CD8-positive, alpha-beta T cell (primary cell): ENCODE measurements at regions of chr6 and their contacts with region 1.

Region 1: DNA sequence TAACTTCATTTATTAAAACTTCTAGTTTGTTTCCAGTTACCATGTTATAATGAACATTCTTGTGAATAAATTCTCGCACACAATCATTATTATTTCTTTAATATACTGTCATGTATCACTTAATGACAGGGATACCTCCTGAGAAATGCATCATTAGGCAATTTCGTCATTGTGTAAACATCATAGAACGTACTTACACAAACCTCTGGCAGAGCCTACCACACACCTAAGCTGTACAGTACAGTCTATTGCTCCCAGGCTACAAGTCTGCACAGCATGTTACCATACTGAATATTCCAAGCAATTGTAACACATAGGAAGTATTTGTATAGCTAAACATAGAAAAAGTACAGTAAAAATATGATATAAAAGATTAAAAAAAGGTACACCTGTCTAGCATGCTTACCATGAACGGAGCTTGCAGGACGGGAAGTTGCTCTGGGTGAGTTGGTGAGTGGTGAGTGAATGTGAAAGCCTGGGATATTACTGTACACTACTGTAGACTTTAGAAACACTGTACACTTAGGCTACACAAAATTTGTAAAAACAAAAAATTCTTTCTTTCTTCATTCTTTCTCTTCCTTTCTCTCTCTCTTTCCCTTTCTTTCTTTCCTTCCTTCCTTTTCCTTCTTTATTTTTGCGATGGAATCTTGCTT is 268.2 kb upstream of the SOX4 start:
- DNase-seq: no peak
- ATAC-seq: no peak
- H3K4me3 ChIP-seq: no peak overlapping the region
- H3K4me3 Mint-ChIP-seq: no peak overlapping the region
- H3K27ac ChIP-seq: no peak overlapping the region
- H3K27ac Mint-ChIP-seq: no peak overlapping the region
- H3K4me1 ChIP-seq: no peaks in the 10 kb centered on the region
- H3K4me1 Mint-ChIP-seq: no peaks in the 10 kb centered on the region
- H3K27me3 ChIP-seq: no peaks in the 10 kb centered on the region
- H3K27me3 Mint-ChIP-seq: peaks cover 2% of the 10 kb centered on the region
- CTCF ChIP-seq: no peak

Region 2: GRCh38 chr6:23272536-23272935 is 1947.2 kb after region 1 on chr6:
- CTCF ChIA-PET with region 1: no interaction called
- POLR2A ChIA-PET with region 1: no interaction called
- intact Hi-C with region 1: loop called in 1 of 2 experiments (anchors 10 kb)
- DNase-seq: no peak
- ATAC-seq: no peak
- H3K4me3 ChIP-seq: no peak overlapping the region
- H3K4me3 Mint-ChIP-seq: no peak overlapping the region
- H3K27ac ChIP-seq: no peak overlapping the region
- H3K27ac Mint-ChIP-seq: no peak overlapping the region
- H3K4me1 ChIP-seq: no peaks in the 10 kb centered on the region
- H3K4me1 Mint-ChIP-seq: no peaks in the 10 kb centered on the region
- H3K27me3 ChIP-seq: no peaks in the 10 kb centered on the region
- H3K27me3 Mint-ChIP-seq: no peaks in the 10 kb centered on the region
- CTCF ChIP-seq: no peak